OCI-LY7 (cell line): ENCODE measurements at regions of chr1 and their contacts with region 1.

Region 1: DNA sequence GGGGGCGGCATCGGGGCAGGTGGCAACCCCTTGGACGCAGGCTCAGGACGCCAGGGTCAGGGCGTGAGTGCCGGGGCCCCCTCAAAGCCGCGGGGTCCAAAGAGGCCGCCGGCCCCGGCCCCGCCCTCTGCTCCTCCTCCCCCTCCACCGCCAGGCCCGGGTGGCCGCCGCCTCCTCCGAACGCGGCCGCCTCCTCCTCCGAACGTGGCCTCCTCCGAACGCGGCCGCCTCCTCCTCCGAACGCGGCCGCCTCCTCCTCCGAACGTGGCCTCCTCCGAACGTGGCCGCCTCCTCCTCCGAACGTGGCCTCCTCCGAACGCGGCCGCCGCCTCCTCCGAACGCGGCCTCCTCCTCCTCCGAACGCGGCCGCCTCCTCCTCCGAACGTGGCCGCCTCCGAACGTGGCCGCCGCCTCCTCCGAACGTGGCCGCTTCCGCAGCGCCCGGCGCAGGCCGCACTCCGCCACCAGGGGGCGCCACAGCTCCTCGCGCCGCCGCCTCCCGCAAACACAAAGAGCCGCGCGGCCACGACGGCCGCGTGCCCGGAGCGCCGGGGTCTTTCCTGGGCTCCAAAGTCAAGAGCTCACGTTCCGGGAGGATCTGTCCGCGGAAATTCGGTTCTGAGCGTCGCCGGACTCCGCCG is 19.3 kb upstream of the SAMD11 start:
- DNase-seq: peak; percentile 74
- H3K4me3 ChIP-seq: peak overlapping the region; percentile 64
- H3K27ac ChIP-seq: no peak overlapping the region
- H3K4me1 ChIP-seq: peaks cover 7% of the 10 kb centered on the region
- CTCF ChIP-seq: peak; percentile 74

Region 2: DNA sequence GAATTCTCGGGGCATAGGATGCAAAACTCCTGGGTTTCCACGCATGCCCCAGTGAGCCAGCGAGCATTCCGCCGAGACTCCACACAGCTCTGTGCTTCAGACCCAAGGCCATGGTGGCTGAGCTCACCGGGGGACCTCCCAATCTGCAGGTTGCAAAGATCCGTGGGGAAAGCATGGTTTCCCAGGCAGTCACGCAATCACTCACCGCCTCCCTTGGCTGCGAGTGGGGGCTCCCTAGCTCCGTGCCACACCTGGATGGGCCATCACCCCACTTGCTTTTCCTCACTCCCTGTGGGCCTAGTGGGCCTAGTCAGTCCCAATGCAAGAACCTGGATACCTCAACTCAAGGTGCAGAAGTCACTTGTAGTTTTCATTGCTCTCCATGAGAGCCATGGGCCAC is 17.7 kb before region 1 on chr1:
- CTCF ChIA-PET with region 1: no interaction called
- POLR2A ChIA-PET with region 1: no interaction called
- intact Hi-C with region 1: no loop called
- DNase-seq: no peak
- H3K4me3 ChIP-seq: no peak overlapping the region
- H3K27ac ChIP-seq: no peak overlapping the region
- H3K4me1 ChIP-seq: no peaks in the 10 kb centered on the region
- CTCF ChIP-seq: no peak

Region 3: DNA sequence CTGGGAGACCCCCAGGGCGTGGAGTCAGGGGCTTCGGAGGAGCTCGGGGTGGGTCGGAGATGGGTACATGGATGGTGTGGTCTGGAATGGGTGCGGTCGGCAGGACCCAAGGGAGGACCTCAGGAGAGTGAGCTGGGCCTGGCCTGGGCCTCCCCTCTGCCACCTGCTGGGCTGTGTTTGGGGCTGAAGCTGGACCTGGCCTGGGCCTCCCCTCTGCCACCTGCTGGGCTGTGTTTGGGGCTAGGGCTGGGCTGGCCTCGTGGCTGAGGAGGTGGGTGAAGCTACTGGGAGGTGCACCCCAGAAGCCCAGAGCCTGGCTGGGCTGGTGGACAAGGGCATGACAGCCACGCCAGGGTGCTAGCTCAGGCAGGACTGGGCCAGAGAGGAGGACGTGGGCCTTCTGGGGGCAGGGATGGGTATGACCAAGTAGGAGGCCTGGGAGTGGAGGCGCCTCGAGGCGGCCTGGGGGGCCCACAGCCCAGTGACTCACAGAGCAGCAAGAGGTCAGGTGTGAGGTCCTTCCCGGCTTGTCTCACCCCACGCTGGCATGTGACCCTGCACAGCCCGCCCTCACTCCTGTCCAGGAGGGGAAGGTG is 33.8 kb after region 1 on chr1:
- CTCF ChIA-PET with region 1: no interaction called
- POLR2A ChIA-PET with region 1: no interaction called
- intact Hi-C with region 1: loop called (anchors 5 kb)
- DNase-seq: no peak
- H3K4me3 ChIP-seq: no peak overlapping the region
- H3K27ac ChIP-seq: no peak overlapping the region
- H3K4me1 ChIP-seq: peaks cover 5% of the 10 kb centered on the region
- CTCF ChIP-seq: no peak

Region 4: DNA sequence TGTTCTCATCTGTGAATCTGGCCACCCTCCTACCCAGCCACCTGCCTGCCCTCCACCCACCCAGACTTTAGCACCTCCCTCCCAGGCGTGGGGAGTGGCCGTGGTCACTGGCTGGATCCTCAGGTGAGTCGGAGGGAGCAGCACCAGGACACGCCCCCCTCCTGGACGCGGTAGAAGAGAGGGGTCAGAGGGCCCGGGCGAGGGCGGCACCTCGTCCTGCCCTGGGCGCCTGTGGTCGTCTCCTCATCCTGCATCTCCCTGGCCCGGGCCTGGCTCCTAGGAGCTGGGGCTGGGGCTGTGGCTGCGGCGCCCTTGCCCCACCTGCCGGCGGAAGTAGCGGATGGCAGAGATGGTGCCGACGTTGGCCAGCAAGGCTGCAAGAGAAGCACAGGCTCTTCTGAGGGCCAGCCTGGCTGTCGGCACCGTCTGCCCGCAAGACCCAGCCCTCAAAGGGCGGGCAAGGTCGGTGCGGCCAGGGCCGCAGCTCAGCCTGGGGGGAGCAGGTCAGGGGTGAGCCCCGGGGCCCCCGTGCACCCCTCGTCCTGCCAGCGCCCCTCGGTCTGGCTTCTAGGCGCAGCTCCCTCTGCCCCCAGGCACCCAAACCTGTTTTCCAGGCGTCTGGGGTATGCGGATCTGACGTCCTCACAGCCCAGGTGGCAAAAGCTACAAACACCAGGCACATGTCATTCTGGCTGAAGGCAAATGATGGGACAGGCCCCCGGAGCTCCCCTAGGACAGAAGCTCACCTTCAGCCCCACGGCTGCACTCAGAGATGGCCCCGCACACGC is 71.7 kb after region 1 on chr1:
- CTCF ChIA-PET with region 1: no interaction called
- POLR2A ChIA-PET with region 1: no interaction called
- intact Hi-C with region 1: loop called (anchors 1 kb)
- DNase-seq: peak; percentile 58
- H3K4me3 ChIP-seq: no peak overlapping the region
- H3K27ac ChIP-seq: no peak overlapping the region
- H3K4me1 ChIP-seq: no peaks in the 10 kb centered on the region
- CTCF ChIP-seq: peak; percentile 68